ENCODE measurements at regions of chr14 and their contacts with region 1.

Region 1: DNA sequence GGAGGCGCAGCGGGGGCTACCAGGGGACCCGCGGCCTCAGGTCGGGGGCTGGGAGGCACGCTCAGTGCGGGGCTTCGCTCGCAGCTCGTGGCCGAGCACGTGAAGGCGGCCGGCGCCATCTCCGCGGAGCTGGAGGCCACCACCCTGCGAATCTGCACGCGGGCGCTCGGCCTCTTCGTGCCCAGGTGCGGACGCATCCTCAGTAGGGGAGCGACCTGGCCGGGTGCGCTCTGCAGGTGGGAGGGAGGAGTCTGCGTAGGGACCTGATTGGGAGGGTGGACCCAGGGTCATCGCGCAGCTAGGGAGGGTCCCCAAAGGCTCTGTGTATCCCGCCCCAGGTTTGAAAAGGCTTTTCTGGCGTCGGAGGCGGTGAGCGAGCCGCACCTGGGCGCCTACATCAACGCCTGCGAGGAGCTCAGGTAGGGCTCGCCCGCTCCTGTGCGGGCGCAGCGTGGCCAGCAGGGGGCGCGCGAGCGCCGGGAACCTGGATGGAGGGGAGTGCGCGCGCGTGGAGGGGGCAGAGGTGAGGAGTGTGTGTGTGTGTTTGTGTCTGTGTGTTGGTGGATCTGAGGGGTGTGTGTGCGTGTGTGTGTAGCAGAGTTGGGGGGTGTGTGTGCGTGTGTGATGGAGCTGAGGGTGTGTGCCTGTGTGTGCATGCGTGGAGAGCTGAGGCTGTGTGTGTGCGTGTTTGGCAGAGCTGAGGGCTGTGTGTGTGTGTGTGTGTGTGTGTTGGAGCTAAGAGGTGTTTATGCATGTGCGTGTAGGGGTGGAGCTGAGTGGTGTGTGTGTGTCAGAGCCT is 10.3 kb downstream of the EXOC3L4 start:
- DNase-seq: peak in 1 of 2 experiments; percentile 93
- H3K4me3 ChIP-seq: peak overlapping the region in 3 of 4 experiments; percentile 15 to 39 (median 32); a peak in 4 of 8 replicates
- H3K27ac ChIP-seq: no peak overlapping the region
- H3K4me1 ChIP-seq: peaks cover 2 to 29% (median 19%) of the 10 kb centered on the region in 4 experiments
- H3K27me3 ChIP-seq: peaks cover 7 to 42% (median 34%) of the 10 kb centered on the region in 4 experiments
- CTCF ChIP-seq: peak in 2 of 3 experiments; percentile 86 to 94; a peak in 3 of 4 replicates
- EP300 ChIP-seq: no peak
- POLR2A ChIP-seq: no peak
- RAD21 ChIP-seq: peak; percentile 84 to 95

Region 2: DNA sequence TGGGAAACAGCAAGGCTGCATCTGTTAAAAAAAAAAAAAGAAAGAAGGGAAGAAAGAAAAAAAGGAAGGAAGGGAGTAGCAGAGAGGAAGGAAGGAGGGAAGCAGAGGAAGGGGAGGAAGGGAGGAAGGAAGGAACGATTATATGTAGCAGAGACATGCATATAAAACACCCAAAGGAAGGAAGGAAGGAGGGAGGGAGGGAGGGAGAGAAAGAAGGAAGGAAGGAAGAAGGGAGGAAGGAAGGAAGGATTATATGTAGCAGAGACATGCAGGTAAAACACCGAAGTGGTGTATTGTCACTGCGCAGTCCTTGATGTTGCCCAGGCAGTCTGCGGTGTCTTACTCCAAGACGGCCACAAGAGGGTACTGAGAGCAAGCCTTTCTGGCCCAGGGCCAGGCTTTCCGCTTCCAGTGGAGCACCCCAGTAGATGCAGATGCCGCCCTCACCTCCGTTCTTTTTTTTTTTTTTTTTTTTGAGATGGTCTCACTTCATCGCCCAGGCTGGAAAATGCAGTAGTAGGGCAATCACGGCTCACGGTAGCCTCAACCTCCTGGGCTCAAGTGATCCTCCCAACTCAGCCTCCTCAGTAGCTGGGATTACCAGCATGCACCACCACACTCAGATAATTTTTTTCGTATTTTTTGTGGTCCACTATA is 26.6 kb before region 1 on chr14:
- CTCF ChIA-PET with region 1: interaction called, 74 read pairs
- POLR2A ChIA-PET with region 1: no interaction called
- DNase-seq: peak in 1 of 2 experiments; percentile 60
- H3K4me3 ChIP-seq: no peak overlapping the region
- H3K27ac ChIP-seq: no peak overlapping the region
- H3K4me1 ChIP-seq: peaks cover 0 to 6% (median 0%) of the 10 kb centered on the region in 4 experiments; a peak in 2 of 7 replicates
- H3K27me3 ChIP-seq: peaks cover 0 to 11% (median 6%) of the 10 kb centered on the region in 4 experiments; a peak in 3 of 7 replicates
- CTCF ChIP-seq: peak; percentile 89 to 90 (median 89)
- EP300 ChIP-seq: no peak
- POLR2A ChIP-seq: no peak
- RAD21 ChIP-seq: peak; percentile 93 to 94

Region 3: DNA sequence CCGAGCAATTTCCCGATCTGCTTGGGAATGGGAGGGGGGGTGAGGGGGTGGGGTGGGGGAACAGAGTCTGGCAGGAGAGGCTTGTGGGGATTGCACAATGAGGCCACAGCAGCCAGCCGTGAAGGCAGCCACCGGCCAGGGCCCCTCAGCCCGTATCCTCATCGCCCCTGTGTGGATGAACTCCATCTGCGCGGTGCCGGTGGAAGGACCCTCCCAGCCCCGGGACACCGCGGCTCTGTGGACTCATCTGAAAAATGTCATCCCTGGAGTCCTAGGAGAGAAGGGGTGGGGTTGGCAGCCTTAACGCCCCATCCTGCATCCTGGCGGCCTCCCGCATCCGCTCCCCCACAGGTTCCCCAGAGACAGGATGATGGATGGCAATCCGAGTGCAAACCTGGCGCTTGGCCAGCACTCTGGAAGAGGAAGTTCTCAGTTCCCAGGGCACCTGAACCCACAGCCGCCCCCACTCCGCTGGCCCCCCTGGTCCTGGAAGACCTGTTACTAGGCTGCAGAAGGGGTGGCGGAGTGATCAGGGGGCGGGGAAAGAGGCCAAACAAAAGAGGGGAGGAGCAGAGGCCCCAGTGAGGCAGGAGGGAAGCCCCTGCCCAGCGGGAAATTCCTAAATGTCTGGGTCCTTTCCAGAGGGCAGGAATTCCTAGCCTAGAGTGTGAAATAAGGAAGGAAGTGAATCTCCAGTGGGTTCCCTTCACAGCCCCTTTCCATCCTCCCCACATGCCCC is 17.2 kb after region 1 on chr14:
- CTCF ChIA-PET with region 1: interaction called, 276 read pairs
- POLR2A ChIA-PET with region 1: interaction called, 5 read pairs
- DNase-seq: peak in 1 of 2 experiments; percentile 80
- H3K4me3 ChIP-seq: peak overlapping the region in 3 of 4 experiments; percentile 21 to 62 (median 32); a peak in 5 of 8 replicates
- H3K27ac ChIP-seq: no peak overlapping the region
- H3K4me1 ChIP-seq: peaks cover 0 to 35% (median 25%) of the 10 kb centered on the region in 4 experiments; a peak in 6 of 7 replicates
- H3K27me3 ChIP-seq: peaks cover 0 to 36% (median 26%) of the 10 kb centered on the region in 4 experiments; a peak in 6 of 7 replicates
- CTCF ChIP-seq: no peak
- EP300 ChIP-seq: no peak
- POLR2A ChIP-seq: no peak
- RAD21 ChIP-seq: no peak

Region 4: DNA sequence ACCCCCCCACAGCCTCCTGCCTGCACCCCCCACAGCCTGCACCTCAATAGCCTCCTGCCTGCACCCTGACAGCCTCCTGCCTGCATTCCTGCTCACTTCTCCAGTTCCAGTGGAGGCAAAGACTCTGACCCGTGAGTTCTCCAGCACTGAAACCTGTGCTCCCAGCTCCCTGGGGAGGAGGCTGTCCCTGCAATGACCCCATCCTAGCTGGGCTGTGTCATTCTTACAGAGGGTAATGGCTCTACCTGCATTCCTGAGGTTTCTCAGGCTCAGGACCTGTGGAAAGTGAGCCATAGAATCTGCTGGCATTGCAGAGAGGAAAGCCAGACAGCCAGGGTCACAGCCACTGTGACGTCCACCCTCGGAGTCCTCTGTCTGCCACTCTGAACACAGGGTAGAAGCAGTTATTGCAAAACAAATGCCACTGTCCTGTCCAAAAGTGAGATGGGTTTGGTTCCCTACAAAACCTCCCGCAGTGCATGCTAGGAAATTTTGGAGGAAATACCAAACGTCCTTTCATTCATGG is 56.1 kb after region 1 on chr14:
- CTCF ChIA-PET with region 1: interaction called, 10 read pairs
- POLR2A ChIA-PET with region 1: no interaction called
- DNase-seq: no peak
- H3K4me3 ChIP-seq: no peak overlapping the region
- H3K27ac ChIP-seq: no peak overlapping the region
- H3K4me1 ChIP-seq: peaks cover 0 to 5% (median 4%) of the 10 kb centered on the region in 4 experiments; a peak in 3 of 7 replicates
- H3K27me3 ChIP-seq: no peaks in the 10 kb centered on the region
- CTCF ChIP-seq: no peak
- EP300 ChIP-seq: no peak
- POLR2A ChIP-seq: no peak
- RAD21 ChIP-seq: no peak

Region 5: GRCh38 chr14:103185051-103185992 is 80.5 kb after region 1 on chr14:
- CTCF ChIA-PET with region 1: interaction called, 34 read pairs
- POLR2A ChIA-PET with region 1: interaction called, 3 read pairs
- DNase-seq: no peak
- H3K4me3 ChIP-seq: no peak overlapping the region
- H3K27ac ChIP-seq: no peak overlapping the region
- H3K4me1 ChIP-seq: peaks cover 8 to 14% (median 11%) of the 10 kb centered on the region in 4 experiments; a peak in 5 of 7 replicates
- H3K27me3 ChIP-seq: peaks cover 1 to 21% (median 19%) of the 10 kb centered on the region in 4 experiments
- CTCF ChIP-seq: peak in 2 of 3 experiments; percentile 27 to 53; a peak in 2 of 4 replicates
- EP300 ChIP-seq: no peak
- POLR2A ChIP-seq: no peak
- RAD21 ChIP-seq: peak in 1 of 2 experiments; percentile 22; a peak in 1 of 4 replicates

Region 6: GRCh38 chr14:103281496-103282231 is 176.8 kb after region 1 on chr14:
- CTCF ChIA-PET with region 1: interaction called, 34 read pairs
- POLR2A ChIA-PET with region 1: interaction called, 4 read pairs
- DNase-seq: no peak
- H3K4me3 ChIP-seq: no peak overlapping the region
- H3K27ac ChIP-seq: no peak overlapping the region
- H3K4me1 ChIP-seq: peaks cover 5 to 26% (median 15%) of the 10 kb centered on the region in 4 experiments
- H3K27me3 ChIP-seq: peaks cover 0 to 20% (median 11%) of the 10 kb centered on the region in 4 experiments; a peak in 5 of 7 replicates
- CTCF ChIP-seq: peak; percentile 57 to 78 (median 63)
- EP300 ChIP-seq: no peak
- POLR2A ChIP-seq: no peak
- RAD21 ChIP-seq: peak; percentile 60 to 68

Region 7: GRCh38 chr14:103315351-103315911 is 210.6 kb after region 1 on chr14:
- CTCF ChIA-PET with region 1: interaction called, 13 read pairs
- POLR2A ChIA-PET with region 1: no interaction called
- DNase-seq: no peak
- H3K4me3 ChIP-seq: no peak overlapping the region
- H3K27ac ChIP-seq: no peak overlapping the region
- H3K4me1 ChIP-seq: peaks cover 4 to 17% (median 9%) of the 10 kb centered on the region in 4 experiments
- H3K27me3 ChIP-seq: no peaks in the 10 kb centered on the region
- CTCF ChIP-seq: no peak
- EP300 ChIP-seq: no peak
- POLR2A ChIP-seq: no peak
- RAD21 ChIP-seq: no peak

Measured in H1 (cell line).